CD4-positive, alpha-beta memory T cell (primary cell): ENCODE measurements at regions of chr14 and their contacts with region 1.

Region 1: GRCh38 chr14:60248697-60249318 is at the start of gene PPM1A:
- DNase-seq: peak; percentile 93 to 95 (median 94)
- H3K4me3 ChIP-seq: peak within 1 kb of the TSS; percentile 79 to 92
- H3K4me3 Mint-ChIP-seq: peak within 1 kb of the TSS; percentile 95 to 98 (median 97)
- H3K27ac ChIP-seq: peak within 1 kb of the TSS; percentile 99
- H3K27ac Mint-ChIP-seq: peak within 1 kb of the TSS; percentile 99 to 100 (median 100)
- H3K4me1 ChIP-seq: peaks cover 55% of the 10 kb centered on the region
- H3K4me1 Mint-ChIP-seq: peaks cover 32 to 56% (median 42%) of the 10 kb centered on the region in 4 donors
- H3K27me3 ChIP-seq: no peaks in the 10 kb centered on the region
- H3K27me3 Mint-ChIP-seq: peaks cover 0 to 1% of the 10 kb centered on the region in 2 donors
- total RNA-seq, gene PPM1A: 48.2 to 48.5 TPM

Region 2: DNA sequence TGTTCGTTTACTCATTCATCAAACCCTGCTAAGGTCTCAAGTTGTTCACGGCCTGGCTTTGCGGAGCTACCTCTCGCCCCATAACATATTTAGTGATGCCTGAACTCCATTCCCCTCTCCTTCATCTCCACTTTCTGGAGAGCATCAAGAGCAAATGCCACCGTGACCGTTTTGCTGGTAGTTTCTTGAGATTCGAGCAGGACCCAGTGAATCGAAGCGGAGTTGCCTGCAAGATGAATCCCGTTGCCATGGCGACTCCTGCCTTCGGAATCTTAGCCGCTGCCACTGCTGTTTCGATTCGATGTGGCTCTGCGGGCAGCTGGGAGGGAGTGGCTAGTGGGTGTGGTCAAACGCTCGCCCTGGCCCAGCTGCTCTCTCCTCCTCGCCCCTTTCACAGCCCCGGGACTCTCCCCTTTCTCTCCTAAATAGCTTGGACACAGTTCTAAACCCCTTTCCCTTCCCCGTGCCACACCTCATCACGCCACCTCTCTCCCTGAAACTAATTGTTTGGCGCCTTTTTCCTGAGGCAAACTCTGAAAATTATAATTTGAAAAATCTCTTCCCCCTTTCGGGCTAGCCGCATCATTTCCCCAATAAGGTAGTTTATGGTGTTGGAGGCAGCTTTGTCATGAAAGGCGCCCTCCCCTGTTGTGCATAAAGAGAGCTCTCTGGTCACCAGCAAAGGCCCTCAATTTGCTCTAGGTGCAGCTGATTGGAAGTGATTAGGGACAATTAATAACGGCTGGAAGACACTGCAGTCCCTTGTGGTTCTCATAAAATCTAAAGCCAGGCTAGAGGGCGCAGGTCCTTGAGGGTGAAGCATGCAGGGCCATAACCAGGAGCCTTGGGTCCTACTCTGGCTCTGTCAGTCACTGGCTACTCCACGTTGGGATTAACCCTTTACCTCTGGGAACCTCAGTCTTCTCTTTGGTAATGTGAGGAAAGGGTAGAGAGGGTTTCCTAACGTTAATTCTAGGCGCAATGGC is 1058.7 kb before region 1 on chr14:
- CTCF ChIA-PET with region 1: no interaction called
- POLR2A ChIA-PET with region 1: interaction called, 9 read pairs
- intact Hi-C with region 1: loop called (anchors 1 kb)
- DNase-seq: peak; percentile 67 to 89 (median 76)
- H3K4me3 ChIP-seq: peak overlapping the region; percentile 77 to 82
- H3K4me3 Mint-ChIP-seq: peak overlapping the region; percentile 95 to 100 (median 98)
- H3K27ac ChIP-seq: peak overlapping the region; percentile 88
- H3K27ac Mint-ChIP-seq: peak overlapping the region; percentile 84 to 99 (median 98)
- H3K4me1 ChIP-seq: peaks cover 16% of the 10 kb centered on the region
- H3K4me1 Mint-ChIP-seq: peaks cover 14 to 34% (median 16%) of the 10 kb centered on the region in 4 donors
- H3K27me3 ChIP-seq: peaks cover 5% of the 10 kb centered on the region
- H3K27me3 Mint-ChIP-seq: peaks cover 0 to 3% of the 10 kb centered on the region in 2 donors

Region 3: GRCh38 chr14:59964251-59965007 is 284.4 kb before region 1 on chr14:
- CTCF ChIA-PET with region 1: interaction called, 3 read pairs
- POLR2A ChIA-PET with region 1: interaction called, 15 read pairs
- intact Hi-C with region 1: loop called (anchors 1 kb)
- DNase-seq: peak in 1 of 5 donors; percentile 5
- H3K4me3 ChIP-seq: no peak overlapping the region
- H3K4me3 Mint-ChIP-seq: peak overlapping the region; percentile 77 to 98 (median 94)
- H3K27ac ChIP-seq: no peak overlapping the region
- H3K27ac Mint-ChIP-seq: peak overlapping the region in 5 of 7 donors; percentile 75 to 99 (median 99)
- H3K4me1 ChIP-seq: no peaks in the 10 kb centered on the region
- H3K4me1 Mint-ChIP-seq: peaks cover 0 to 13% (median 10%) of the 10 kb centered on the region in 4 donors
- H3K27me3 ChIP-seq: no peaks in the 10 kb centered on the region
- H3K27me3 Mint-ChIP-seq: peaks cover 2 to 3% of the 10 kb centered on the region in 2 donors

Region 4: GRCh38 chr14:60002819-60003492 is 245.9 kb before region 1 on chr14:
- CTCF ChIA-PET with region 1: no interaction called
- POLR2A ChIA-PET with region 1: no interaction called
- intact Hi-C with region 1: no loop called
- DNase-seq: no peak
- H3K4me3 ChIP-seq: no peak overlapping the region
- H3K4me3 Mint-ChIP-seq: no peak overlapping the region
- H3K27ac ChIP-seq: no peak overlapping the region
- H3K27ac Mint-ChIP-seq: no peak overlapping the region
- H3K4me1 ChIP-seq: no peaks in the 10 kb centered on the region
- H3K4me1 Mint-ChIP-seq: no peaks in the 10 kb centered on the region
- H3K27me3 ChIP-seq: no peaks in the 10 kb centered on the region
- H3K27me3 Mint-ChIP-seq: peaks cover 4 to 8% of the 10 kb centered on the region in 2 donors

Region 5: DNA sequence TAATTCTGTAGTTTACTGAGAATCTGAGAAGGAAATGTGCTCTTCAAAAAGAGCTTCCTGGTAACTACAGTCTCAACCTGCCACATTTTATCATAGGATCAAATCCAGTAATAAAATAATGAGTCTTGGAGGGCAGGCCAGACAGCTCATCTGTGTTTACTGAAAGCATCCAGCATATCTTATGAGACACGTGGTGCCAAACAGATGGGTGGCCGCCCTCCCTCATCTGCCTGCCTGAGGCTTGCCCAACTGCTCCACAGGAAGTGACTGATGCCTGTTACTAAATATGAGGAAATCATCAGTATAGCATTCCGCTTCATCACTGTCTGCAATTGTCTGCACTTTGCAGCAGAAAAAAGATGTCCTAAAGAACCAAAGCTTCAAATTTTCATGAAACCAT is 97.1 kb before region 1 on chr14:
- CTCF ChIA-PET with region 1: interaction called, 3 read pairs
- POLR2A ChIA-PET with region 1: interaction called, 19 read pairs
- intact Hi-C with region 1: no loop called
- DNase-seq: peak; percentile 63 to 85 (median 68)
- H3K4me3 ChIP-seq: no peak overlapping the region
- H3K4me3 Mint-ChIP-seq: peak overlapping the region in 7 of 8 donors; percentile 17 to 69 (median 36)
- H3K27ac ChIP-seq: peak overlapping the region; percentile 50
- H3K27ac Mint-ChIP-seq: peak overlapping the region; percentile 90 to 95 (median 94)
- H3K4me1 ChIP-seq: peaks cover 49% of the 10 kb centered on the region
- H3K4me1 Mint-ChIP-seq: peaks cover 35 to 54% (median 44%) of the 10 kb centered on the region in 4 donors
- H3K27me3 ChIP-seq: no peaks in the 10 kb centered on the region
- H3K27me3 Mint-ChIP-seq: no peaks in the 10 kb centered on the region

Region 6: GRCh38 chr14:60266021-60266937 is 17.5 kb after region 1 on chr14:
- CTCF ChIA-PET with region 1: interaction called, 11 read pairs
- POLR2A ChIA-PET with region 1: interaction called, 16 read pairs
- intact Hi-C with region 1: loop called (anchors 1 kb)
- DNase-seq: peak in 4 of 5 donors; percentile 16 to 31 (median 24)
- H3K4me3 ChIP-seq: no peak overlapping the region
- H3K4me3 Mint-ChIP-seq: no peak overlapping the region
- H3K27ac ChIP-seq: no peak overlapping the region
- H3K27ac Mint-ChIP-seq: no peak overlapping the region
- H3K4me1 ChIP-seq: peaks cover 8% of the 10 kb centered on the region
- H3K4me1 Mint-ChIP-seq: peaks cover 19 to 39% (median 34%) of the 10 kb centered on the region in 4 donors
- H3K27me3 ChIP-seq: no peaks in the 10 kb centered on the region
- H3K27me3 Mint-ChIP-seq: no peaks in the 10 kb centered on the region

Region 7: DNA sequence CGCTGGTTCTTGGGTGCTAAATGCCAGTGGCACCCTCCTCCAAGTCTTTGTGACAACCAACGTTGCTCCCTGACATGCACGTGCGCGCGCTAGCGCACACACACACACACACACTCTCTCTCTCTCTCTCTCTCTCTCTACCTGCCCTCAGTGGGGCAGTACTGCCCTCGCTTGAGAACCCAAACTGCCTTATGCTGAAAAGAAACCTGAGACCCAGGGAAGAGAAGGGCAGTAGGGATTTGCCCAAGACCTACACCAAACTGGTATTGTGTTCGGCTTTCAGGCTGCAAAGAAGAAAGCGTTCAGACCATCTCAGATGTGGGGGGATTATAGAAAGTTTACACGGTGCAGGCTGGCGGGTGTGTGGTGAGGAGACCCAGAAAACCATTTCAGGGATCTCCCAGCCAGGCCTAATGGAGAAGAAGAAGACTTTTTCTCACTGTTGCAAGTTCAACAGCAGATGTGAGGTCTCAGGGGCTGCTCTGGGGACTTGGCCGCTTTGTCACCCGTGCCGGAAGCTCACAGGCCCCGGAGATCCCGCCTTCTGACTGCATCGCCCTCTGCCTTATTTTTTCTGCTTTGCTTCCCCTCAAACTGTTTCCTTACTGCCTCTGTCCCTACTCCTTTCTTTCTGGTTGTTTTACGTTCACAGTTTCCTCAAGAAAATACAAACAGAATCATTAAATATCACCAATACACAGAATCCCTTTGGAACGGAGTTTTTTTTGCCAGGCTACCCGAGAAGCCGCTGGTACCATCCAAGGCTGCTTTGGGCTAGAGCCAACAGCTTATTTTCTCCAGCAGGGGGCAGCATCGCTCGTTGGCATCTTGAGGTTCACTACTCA is 82.6 kb after region 1 on chr14:
- CTCF ChIA-PET with region 1: interaction called, 19 read pairs
- POLR2A ChIA-PET with region 1: interaction called, 30 read pairs
- intact Hi-C with region 1: loop called (anchors 1 kb)
- DNase-seq: peak; percentile 70 to 77 (median 75)
- H3K4me3 ChIP-seq: peak overlapping the region; percentile 58 to 84
- H3K4me3 Mint-ChIP-seq: peak overlapping the region; percentile 93 to 100 (median 98)
- H3K27ac ChIP-seq: peak overlapping the region; percentile 33
- H3K27ac Mint-ChIP-seq: peak overlapping the region; percentile 75 to 98 (median 95)
- H3K4me1 ChIP-seq: peaks cover 21% of the 10 kb centered on the region
- H3K4me1 Mint-ChIP-seq: peaks cover 19 to 33% (median 26%) of the 10 kb centered on the region in 4 donors
- H3K27me3 ChIP-seq: no peaks in the 10 kb centered on the region
- H3K27me3 Mint-ChIP-seq: peaks cover 9 to 42% of the 10 kb centered on the region in 2 donors

Region 8: DNA sequence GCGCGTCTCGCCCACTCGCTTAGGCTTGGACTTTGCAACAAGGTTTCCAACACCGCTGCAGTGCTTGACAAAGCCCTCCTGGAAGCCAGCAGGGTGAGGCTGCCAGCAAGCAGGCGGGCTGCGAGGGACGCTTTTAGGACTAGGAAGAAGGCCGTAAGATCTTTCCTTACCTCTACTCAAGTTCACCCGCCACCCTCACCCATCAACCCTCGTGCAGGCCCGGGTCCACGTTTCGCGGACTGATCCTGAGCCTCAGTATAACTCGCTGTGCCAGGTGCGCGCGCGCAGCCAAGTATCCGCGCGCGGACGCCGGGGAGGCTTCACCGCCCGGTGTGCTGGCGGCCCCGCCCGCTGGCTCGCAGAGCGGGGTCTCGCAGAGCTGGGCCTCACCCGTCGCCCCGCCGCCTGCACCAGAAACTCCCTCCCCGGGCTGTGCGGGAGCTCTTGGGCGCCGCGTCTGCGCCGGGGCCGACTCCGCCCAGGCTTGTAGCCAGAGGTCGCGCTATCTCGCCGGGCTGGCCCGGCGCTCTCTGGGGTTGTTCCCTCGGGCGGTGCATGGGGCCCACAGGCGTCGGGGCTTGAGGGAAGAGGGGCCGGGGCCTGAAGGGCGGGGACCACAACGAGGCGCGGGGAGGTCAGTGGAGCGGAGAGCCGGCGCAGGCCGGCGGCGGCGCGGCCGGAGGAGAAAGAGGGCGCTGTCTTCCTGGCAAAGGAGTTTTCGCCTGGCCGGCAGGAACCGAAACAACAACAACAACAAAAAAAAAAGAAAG is 408.1 kb after region 1 on chr14:
- CTCF ChIA-PET with region 1: no interaction called
- POLR2A ChIA-PET with region 1: no interaction called
- intact Hi-C with region 1: no loop called
- DNase-seq: no peak
- H3K4me3 ChIP-seq: peak overlapping the region in 1 of 2 donors; percentile 23
- H3K4me3 Mint-ChIP-seq: peak overlapping the region; percentile 76 to 83 (median 78)
- H3K27ac ChIP-seq: no peak overlapping the region
- H3K27ac Mint-ChIP-seq: peak overlapping the region in 1 of 7 donors; percentile 6
- H3K4me1 ChIP-seq: peaks cover 42% of the 10 kb centered on the region
- H3K4me1 Mint-ChIP-seq: peaks cover 33 to 58% (median 41%) of the 10 kb centered on the region in 4 donors
- H3K27me3 ChIP-seq: peaks cover 52% of the 10 kb centered on the region
- H3K27me3 Mint-ChIP-seq: peaks cover 52 to 63% of the 10 kb centered on the region in 2 donors